Right ventricle myocardium inferior (tissue), 1 donor: ENCODE measurements at regions of chr2 and their contacts with region 1.

Region 1: DNA sequence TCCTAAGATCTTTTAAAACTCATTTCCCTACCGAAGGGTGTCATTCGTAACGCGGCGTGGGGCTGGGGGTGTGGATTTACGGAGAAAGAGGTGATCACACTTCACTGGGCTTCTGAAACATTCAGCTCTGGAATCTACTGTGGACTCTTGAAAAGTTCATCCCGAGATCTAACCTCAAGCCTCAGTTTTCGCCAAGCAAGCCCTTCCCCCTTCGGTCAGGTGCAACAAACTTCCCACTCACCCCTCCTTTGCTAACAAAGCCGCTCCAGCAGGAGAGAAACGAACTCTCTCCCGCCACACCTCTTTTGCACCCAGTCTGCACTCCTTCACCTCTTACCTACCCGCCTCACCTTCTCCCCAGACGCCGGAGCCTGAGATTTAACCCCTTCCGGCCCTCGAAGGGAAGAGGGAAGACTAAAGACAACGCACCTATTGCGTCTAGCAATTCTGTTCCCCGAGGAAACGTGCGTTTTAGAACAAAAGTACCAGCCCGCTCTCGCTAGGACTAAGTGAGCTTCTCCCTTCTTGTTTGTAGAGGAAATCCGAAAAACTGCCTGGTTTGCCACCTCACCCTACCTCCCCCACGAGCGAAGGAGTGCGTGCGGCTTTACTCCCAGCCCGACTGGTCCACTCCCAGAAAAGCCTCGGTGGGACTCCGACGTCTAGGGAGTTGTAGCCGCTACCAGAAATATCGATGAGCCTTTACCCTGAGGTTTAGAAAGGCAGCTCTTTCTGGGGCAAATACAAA is 538 bp upstream of the PEX13 start:
- DNase-seq: peak; percentile 72
- ATAC-seq: peak; percentile 89

Region 2: DNA sequence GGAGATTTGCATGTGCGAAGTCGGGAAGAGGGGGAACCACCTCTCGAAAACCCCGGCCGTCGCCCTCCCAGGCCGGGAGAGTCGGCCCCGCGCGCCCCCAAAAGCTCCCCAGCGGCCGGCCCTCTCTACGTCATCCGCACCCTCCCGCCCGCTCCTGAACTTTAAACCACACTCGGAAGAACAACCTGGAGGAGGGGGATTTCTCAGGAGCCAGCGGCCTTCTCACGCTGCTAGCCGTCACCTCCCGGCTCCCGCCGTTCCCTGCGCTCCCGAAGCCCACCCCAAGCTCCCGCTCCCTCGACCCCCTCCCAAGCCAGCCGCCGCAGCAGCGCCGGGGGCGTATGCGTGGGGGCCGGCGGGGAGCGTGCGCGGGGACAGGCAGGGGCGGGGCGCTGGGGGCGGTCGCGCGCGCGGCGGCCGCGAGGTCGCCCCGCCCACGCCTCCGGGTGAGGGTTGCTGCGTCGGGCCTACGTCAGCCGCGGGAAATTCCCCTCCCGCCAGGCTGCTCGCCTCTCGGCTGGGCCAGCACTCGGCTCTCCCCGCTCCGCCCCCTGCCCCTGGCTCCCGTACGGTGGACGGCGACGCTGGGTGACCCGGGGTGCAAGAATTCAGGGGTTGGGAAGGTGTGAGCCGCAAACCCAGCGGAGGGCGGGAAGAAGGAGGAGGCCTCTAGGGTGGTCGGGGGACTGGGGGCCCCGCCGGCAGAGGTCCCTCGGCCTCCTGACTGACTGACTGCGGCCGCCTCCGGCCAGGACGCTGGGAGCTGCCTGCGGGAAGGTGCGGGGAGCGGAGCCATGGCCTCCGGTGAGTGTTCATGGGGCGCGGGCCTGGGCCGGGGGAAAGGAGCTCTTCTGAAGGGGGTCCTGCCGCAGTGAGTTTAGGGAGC is 135.7 kb before region 1 on chr2 and contains the start of gene REL:
- intact Hi-C with region 1: loop called (anchors 2 kb)
- DNase-seq: peak; percentile 94
- ATAC-seq: peak; percentile 97
- total RNA-seq, gene REL: 5.3 TPM

Region 3: GRCh38 chr2:61065715-61066709 is 49.0 kb after region 1 on chr2 and contains the start of gene SANBR:
- intact Hi-C with region 1: loop called (anchors 5 kb)
- DNase-seq: peak; percentile 94
- ATAC-seq: peak; percentile 99
- total RNA-seq, gene SANBR: 6.9 TPM